CD4-positive, alpha-beta T cell (primary cell): ENCODE measurements at regions of chr9 and their contacts with region 1.

Region 1: GRCh38 chr9:129177791-129178559 is at the start of gene IER5L:
- DNase-seq: peak; percentile 87 to 96 (median 93)
- ATAC-seq: peak; percentile 89
- H3K4me3 ChIP-seq: peak within 1 kb of the TSS; percentile 75
- H3K4me3 Mint-ChIP-seq: peak within 1 kb of the TSS; percentile 92
- H3K27ac ChIP-seq: no peak within 1 kb of the TSS
- H3K27ac Mint-ChIP-seq: peak within 1 kb of the TSS; percentile 47
- H3K4me1 ChIP-seq: peaks cover 47% of the 10 kb centered on the region
- H3K4me1 Mint-ChIP-seq: peaks cover 7% of the 10 kb centered on the region
- H3K27me3 ChIP-seq: peaks cover 0 to 7% of the 10 kb centered on the region in 2 experiments
- H3K27me3 Mint-ChIP-seq: peaks cover 4% of the 10 kb centered on the region
- CTCF ChIP-seq: no peak
- total RNA-seq, gene IER5L: 5.6 to 6.4 TPM

Region 2: GRCh38 chr9:128972956-128973355 is 205.0 kb before region 1 on chr9:
- CTCF ChIA-PET with region 1: no interaction called
- POLR2A ChIA-PET with region 1: no interaction called
- intact Hi-C with region 1: no loop called
- DNase-seq: no peak
- ATAC-seq: no peak
- H3K4me3 ChIP-seq: no peak overlapping the region
- H3K4me3 Mint-ChIP-seq: no peak overlapping the region
- H3K27ac ChIP-seq: no peak overlapping the region
- H3K27ac Mint-ChIP-seq: no peak overlapping the region
- H3K4me1 ChIP-seq: no peaks in the 10 kb centered on the region
- H3K4me1 Mint-ChIP-seq: no peaks in the 10 kb centered on the region
- H3K27me3 ChIP-seq: no peaks in the 10 kb centered on the region
- H3K27me3 Mint-ChIP-seq: no peaks in the 10 kb centered on the region
- CTCF ChIP-seq: no peak

Region 3: DNA sequence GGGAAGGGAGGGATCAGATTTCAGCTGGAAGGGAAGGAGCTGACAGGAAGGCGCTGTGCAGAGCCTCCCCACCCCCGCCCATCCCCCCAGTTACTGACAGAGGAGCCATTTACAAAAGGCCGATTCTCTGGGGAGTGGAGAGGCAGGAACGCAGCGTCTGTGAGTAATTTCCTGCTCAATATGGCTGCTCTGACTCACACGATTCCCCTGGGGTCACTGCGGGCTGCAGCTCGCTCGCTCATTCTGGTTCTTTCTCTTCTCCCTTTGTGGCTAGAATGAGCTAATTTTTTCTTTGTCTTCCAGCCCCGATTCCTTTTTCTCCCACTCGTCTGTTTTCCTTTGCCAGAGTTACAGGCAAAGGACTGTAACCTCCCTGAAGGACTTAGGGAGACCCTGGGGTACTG is 38.0 kb before region 1 on chr9:
- CTCF ChIA-PET with region 1: interaction called, 25 read pairs
- POLR2A ChIA-PET with region 1: interaction called, 12 read pairs
- intact Hi-C with region 1: loop called (anchors 2 to 5 kb)
- DNase-seq: peak; percentile 53 to 92 (median 75)
- ATAC-seq: peak; percentile 87
- H3K4me3 ChIP-seq: peak overlapping the region; percentile 65
- H3K4me3 Mint-ChIP-seq: peak overlapping the region; percentile 88
- H3K27ac ChIP-seq: peak overlapping the region; percentile 95 to 96
- H3K27ac Mint-ChIP-seq: peak overlapping the region; percentile 89
- H3K4me1 ChIP-seq: peaks cover 44% of the 10 kb centered on the region
- H3K4me1 Mint-ChIP-seq: peaks cover 34% of the 10 kb centered on the region
- H3K27me3 ChIP-seq: no peaks in the 10 kb centered on the region
- H3K27me3 Mint-ChIP-seq: no peaks in the 10 kb centered on the region
- CTCF ChIP-seq: no peak

Region 4: DNA sequence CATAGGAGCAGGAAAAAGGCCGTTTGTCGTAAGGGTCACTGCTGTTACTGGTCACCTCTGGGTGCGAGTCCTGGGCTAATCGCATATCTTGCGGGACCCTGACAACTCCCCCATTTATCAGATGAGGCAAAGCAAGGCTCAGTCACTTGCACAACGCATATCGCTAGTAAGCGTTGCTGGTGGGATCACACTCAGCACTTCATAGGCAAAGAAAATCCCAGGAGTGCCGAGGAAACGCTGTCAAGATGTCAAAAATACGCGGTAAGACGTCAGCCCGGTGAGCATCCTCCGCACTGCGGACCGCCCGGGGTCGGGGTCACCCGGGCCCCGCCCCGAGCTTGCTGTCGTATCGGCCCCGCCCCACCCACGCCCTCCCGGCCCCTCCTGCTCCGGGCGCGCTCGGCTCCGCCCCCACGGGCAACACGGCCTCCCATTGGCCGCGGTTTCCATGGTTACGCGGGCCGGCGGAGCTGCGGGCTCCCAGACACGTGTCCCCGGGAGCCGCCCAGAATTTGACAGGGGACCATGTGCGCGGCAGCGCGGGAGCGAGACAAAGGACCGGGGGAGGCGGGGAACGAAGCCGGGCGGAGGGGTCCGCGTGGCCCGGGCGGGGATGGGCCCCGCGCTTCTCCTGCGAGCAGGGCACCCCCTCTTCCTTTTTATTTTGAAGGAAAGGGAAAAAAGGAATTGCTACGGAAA is 80.3 kb after region 1 on chr9:
- CTCF ChIA-PET with region 1: no interaction called
- POLR2A ChIA-PET with region 1: interaction called, 7 read pairs
- intact Hi-C with region 1: loop called in 1 of 2 experiments (anchors 5 kb)
- DNase-seq: peak; percentile 77 to 97 (median 87)
- ATAC-seq: peak; percentile 89
- H3K4me3 ChIP-seq: peak overlapping the region; percentile 51
- H3K4me3 Mint-ChIP-seq: peak overlapping the region; percentile 80
- H3K27ac ChIP-seq: no peak overlapping the region
- H3K27ac Mint-ChIP-seq: no peak overlapping the region
- H3K4me1 ChIP-seq: peaks cover 34% of the 10 kb centered on the region
- H3K4me1 Mint-ChIP-seq: peaks cover 47% of the 10 kb centered on the region
- H3K27me3 ChIP-seq: peaks cover 0 to 3% of the 10 kb centered on the region in 2 experiments
- H3K27me3 Mint-ChIP-seq: no peaks in the 10 kb centered on the region
- CTCF ChIP-seq: no peak

Region 5: GRCh38 chr9:129383561-129384416 is 205.8 kb after region 1 on chr9:
- CTCF ChIA-PET with region 1: interaction called, 4 read pairs
- POLR2A ChIA-PET with region 1: interaction called, 14 read pairs
- intact Hi-C with region 1: loop called in 1 of 2 experiments (anchors 10 kb)
- DNase-seq: peak; percentile 54 to 89 (median 73)
- ATAC-seq: peak; percentile 93
- H3K4me3 ChIP-seq: peak overlapping the region; percentile 66
- H3K4me3 Mint-ChIP-seq: peak overlapping the region; percentile 84
- H3K27ac ChIP-seq: peak overlapping the region; percentile 79 to 85
- H3K27ac Mint-ChIP-seq: peak overlapping the region; percentile 83
- H3K4me1 ChIP-seq: peaks cover 21% of the 10 kb centered on the region
- H3K4me1 Mint-ChIP-seq: peaks cover 10% of the 10 kb centered on the region
- H3K27me3 ChIP-seq: no peaks in the 10 kb centered on the region
- H3K27me3 Mint-ChIP-seq: no peaks in the 10 kb centered on the region
- CTCF ChIP-seq: no peak

Region 6: DNA sequence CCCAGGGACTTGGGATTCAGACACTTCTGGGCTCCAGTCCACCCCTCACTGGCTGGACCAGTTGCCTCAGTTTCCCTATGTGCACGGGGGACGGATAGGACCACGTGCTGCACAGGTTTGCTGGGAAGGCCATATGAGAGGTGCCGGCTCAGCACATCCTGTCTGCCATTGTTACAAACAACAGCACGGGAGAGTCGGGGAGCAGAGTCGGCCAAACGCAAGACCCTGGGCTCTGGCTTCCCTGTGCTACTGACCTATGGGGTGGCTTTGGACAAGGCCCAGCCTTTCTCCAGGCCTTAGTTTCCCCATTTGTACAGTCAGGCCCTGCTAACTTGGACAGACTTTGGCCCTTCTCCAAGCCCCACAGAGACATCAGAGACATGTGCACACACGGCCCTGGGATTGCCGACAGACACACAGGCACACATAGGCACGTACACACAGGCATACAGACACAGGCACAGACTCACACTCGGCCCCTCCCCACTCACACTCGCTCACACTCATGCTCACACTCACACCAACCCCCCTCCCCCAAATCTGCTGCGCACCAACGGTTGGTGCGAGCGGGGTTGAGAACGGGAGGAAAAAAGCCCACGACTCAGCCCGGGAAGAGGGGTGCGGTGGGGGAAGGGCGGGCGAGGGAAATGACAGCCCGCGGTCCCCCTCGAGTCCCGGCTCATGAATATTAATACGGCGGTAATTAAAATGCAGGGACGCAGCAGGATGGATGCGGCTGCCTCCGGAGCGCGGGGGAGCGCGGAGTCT is 309.9 kb after region 1 on chr9:
- CTCF ChIA-PET with region 1: no interaction called
- POLR2A ChIA-PET with region 1: interaction called, 3 read pairs
- intact Hi-C with region 1: loop called in 1 of 2 experiments (anchors 5 kb)
- DNase-seq: peak in 13 of 14 experiments; percentile 34 to 79 (median 47)
- ATAC-seq: peak; percentile 13
- H3K4me3 ChIP-seq: peak overlapping the region; percentile 56
- H3K4me3 Mint-ChIP-seq: peak overlapping the region; percentile 83
- H3K27ac ChIP-seq: peak overlapping the region; percentile 77 to 87
- H3K27ac Mint-ChIP-seq: peak overlapping the region; percentile 94
- H3K4me1 ChIP-seq: peaks cover 83% of the 10 kb centered on the region
- H3K4me1 Mint-ChIP-seq: peaks cover 63% of the 10 kb centered on the region
- H3K27me3 ChIP-seq: no peaks in the 10 kb centered on the region
- H3K27me3 Mint-ChIP-seq: peaks cover 5% of the 10 kb centered on the region
- CTCF ChIP-seq: no peak